ENCODE measurements at regions of chr10 and their contacts with region 1.

Region 1: GRCh38 chr10:71383972-71384687 is 12.6 kb upstream of the CDH23 start:
- DNase-seq: peak; percentile 79
- H3K4me3 ChIP-seq: no peak overlapping the region
- H3K27ac ChIP-seq: no peak overlapping the region
- H3K4me1 ChIP-seq: peaks cover 0 to 6% (median under 1%) of the 10 kb centered on the region in 4 donors
- H3K27me3 ChIP-seq: no peaks in the 10 kb centered on the region
- CTCF ChIP-seq: peak; percentile 82 to 94 (median 90)
- EP300 ChIP-seq: no peak
- POLR2A ChIP-seq: no peak

Region 2: DNA sequence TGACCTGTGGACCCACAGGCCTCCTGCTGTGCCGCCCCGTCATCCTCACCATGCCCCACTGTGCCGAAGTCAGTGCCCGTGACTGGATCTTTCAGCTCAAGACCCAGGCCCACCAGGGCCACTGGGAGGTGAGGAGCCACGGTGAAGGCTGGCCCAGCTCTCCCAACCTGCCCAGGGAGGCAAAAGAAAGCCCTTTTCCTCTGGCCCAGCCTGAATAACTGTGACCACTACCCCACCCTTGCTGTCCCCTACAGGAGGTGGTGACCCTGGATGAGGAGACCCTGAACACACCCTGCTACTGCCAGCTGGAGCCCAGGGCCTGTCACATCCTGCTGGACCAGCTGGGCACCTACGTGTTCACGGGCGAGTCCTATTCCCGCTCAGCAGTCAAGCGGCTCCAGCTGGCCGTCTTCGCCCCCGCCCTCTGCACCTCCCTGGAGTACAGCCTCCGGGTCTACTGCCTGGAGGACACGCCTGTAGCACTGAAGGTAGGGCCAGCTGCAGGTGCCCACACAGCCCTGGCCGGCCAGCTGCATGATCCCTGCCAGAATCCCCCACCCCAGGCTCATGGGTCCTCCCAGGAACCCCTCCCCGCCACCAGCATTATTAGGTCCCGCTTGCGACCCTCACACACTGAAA is 90.6 kb before region 1 on chr10:
- in situ Hi-C with region 1: no loop called
- intact Hi-C with region 1: no loop called
- DNase-seq: peak; percentile 46
- H3K4me3 ChIP-seq: no peak overlapping the region
- H3K27ac ChIP-seq: no peak overlapping the region
- H3K4me1 ChIP-seq: no peaks in the 10 kb centered on the region
- H3K27me3 ChIP-seq: no peaks in the 10 kb centered on the region
- CTCF ChIP-seq: no peak
- EP300 ChIP-seq: no peak
- POLR2A ChIP-seq: no peak

Region 3: GRCh38 chr10:71569775-71570588 is 185.9 kb after region 1 on chr10:
- in situ Hi-C with region 1: loop called in 3 of 4 experiments (anchors 10 to 25 kb)
- intact Hi-C with region 1: loop called (anchors 5 kb)
- DNase-seq: peak; percentile 81
- H3K4me3 ChIP-seq: no peak overlapping the region
- H3K27ac ChIP-seq: no peak overlapping the region
- H3K4me1 ChIP-seq: no peaks in the 10 kb centered on the region
- H3K27me3 ChIP-seq: no peaks in the 10 kb centered on the region
- CTCF ChIP-seq: peak; percentile 81 to 91 (median 84)
- EP300 ChIP-seq: no peak
- POLR2A ChIP-seq: no peak

Region 4: DNA sequence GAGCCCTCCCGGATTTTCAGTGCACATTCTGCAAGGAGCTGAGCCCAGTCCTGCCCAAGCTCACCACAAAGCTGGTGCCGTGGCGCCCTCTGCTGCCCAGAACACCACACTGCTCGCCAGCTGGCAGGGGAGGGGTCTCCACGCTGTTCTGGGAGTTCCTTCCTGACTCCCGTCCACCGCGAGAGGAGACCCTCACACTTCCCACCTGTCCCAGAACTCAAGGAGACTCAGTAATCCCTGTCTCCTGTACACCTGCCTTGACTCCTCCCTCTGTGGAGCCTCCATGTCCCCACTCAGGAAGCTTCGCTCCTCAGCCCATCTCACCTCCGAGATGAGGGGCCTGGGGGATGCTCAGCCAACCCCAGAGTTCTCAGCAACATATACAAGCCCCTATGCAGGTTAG is 324.2 kb after region 1 on chr10:
- in situ Hi-C with region 1: loop called (anchors 10 to 25 kb)
- intact Hi-C with region 1: no loop called
- DNase-seq: peak; percentile 62
- H3K4me3 ChIP-seq: no peak overlapping the region
- H3K27ac ChIP-seq: no peak overlapping the region
- H3K4me1 ChIP-seq: peaks cover 6 to 14% (median 7%) of the 10 kb centered on the region in 4 donors
- H3K27me3 ChIP-seq: no peaks in the 10 kb centered on the region
- CTCF ChIP-seq: peak; percentile 78 to 91 (median 81)
- EP300 ChIP-seq: no peak
- POLR2A ChIP-seq: no peak

Region 5: GRCh38 chr10:71812016-71812912 is 428.1 kb after region 1 on chr10:
- in situ Hi-C with region 1: loop called (anchors 10 to 25 kb)
- intact Hi-C with region 1: loop called (anchors 10 kb)
- DNase-seq: peak; percentile 78
- H3K4me3 ChIP-seq: no peak overlapping the region
- H3K27ac ChIP-seq: no peak overlapping the region
- H3K4me1 ChIP-seq: peaks cover 0 to 4% (median 0%) of the 10 kb centered on the region in 4 donors
- H3K27me3 ChIP-seq: no peaks in the 10 kb centered on the region
- CTCF ChIP-seq: peak; percentile 86 to 93 (median 91)
- EP300 ChIP-seq: no peak
- POLR2A ChIP-seq: no peak

Measured in transverse colon (tissue), 4 donors.